Prostate gland (tissue), 2 donors: ENCODE measurements at regions of chr11 and their contacts with region 1.

Region 1: GRCh38 chr11:8033305-8034105 is 46.4 kb downstream of the EIF3F start:
- DNase-seq: peak; percentile 66
- H3K4me3 ChIP-seq: no peak overlapping the region
- H3K27ac ChIP-seq: no peak overlapping the region
- H3K4me1 ChIP-seq: no peaks in the 10 kb centered on the region
- H3K27me3 ChIP-seq: no peaks in the 10 kb centered on the region
- CTCF ChIP-seq: peak; percentile 76 to 86 (median 78)
- POLR2A ChIP-seq: no peak

Region 2: GRCh38 chr11:8075119-8075726 is 41.7 kb after region 1 on chr11:
- intact Hi-C with region 1: loop called (anchors 5 kb)
- DNase-seq: no peak
- H3K4me3 ChIP-seq: no peak overlapping the region
- H3K27ac ChIP-seq: no peak overlapping the region
- H3K4me1 ChIP-seq: no peaks in the 10 kb centered on the region
- H3K27me3 ChIP-seq: peaks cover 4% of the 10 kb centered on the region
- CTCF ChIP-seq: no peak
- POLR2A ChIP-seq: no peak

Region 3: GRCh38 chr11:8099291-8099899 is 65.9 kb after region 1 on chr11:
- intact Hi-C with region 1: loop called (anchors 2 kb)
- DNase-seq: peak; percentile 65
- H3K4me3 ChIP-seq: no peak overlapping the region
- H3K27ac ChIP-seq: no peak overlapping the region
- H3K4me1 ChIP-seq: no peaks in the 10 kb centered on the region
- H3K27me3 ChIP-seq: no peaks in the 10 kb centered on the region
- CTCF ChIP-seq: peak; percentile 58 to 80 (median 68)
- POLR2A ChIP-seq: no peak

Region 4: DNA sequence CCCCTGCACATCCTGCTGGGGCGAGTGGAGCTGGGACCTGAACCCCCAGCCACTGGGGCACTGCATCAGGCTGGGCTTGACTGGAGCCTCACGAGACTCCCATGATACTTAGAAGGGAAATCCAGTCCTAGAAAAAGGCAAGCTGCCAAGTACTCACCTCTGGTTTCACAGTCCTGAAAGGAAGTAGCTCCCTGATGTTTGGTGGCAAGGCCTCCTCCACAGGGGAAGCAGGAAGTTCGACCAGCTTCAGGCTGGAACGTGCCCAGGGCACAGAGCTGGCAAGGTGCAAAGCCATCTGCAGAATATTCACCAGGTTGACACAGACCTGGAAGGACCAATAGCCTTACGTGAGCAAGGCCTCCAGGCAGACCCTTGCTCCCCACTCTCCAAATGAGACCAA is 997.1 kb after region 1 on chr11:
- intact Hi-C with region 1: no loop called
- DNase-seq: no peak
- H3K4me3 ChIP-seq: no peak overlapping the region
- H3K27ac ChIP-seq: no peak overlapping the region
- H3K4me1 ChIP-seq: no peaks in the 10 kb centered on the region
- H3K27me3 ChIP-seq: no peaks in the 10 kb centered on the region
- CTCF ChIP-seq: no peak
- POLR2A ChIP-seq: no peak